Naive thymus-derived CD4-positive, alpha-beta T cell (primary cell): ENCODE measurements at regions of chr7 and their contacts with region 1.

Region 1: DNA sequence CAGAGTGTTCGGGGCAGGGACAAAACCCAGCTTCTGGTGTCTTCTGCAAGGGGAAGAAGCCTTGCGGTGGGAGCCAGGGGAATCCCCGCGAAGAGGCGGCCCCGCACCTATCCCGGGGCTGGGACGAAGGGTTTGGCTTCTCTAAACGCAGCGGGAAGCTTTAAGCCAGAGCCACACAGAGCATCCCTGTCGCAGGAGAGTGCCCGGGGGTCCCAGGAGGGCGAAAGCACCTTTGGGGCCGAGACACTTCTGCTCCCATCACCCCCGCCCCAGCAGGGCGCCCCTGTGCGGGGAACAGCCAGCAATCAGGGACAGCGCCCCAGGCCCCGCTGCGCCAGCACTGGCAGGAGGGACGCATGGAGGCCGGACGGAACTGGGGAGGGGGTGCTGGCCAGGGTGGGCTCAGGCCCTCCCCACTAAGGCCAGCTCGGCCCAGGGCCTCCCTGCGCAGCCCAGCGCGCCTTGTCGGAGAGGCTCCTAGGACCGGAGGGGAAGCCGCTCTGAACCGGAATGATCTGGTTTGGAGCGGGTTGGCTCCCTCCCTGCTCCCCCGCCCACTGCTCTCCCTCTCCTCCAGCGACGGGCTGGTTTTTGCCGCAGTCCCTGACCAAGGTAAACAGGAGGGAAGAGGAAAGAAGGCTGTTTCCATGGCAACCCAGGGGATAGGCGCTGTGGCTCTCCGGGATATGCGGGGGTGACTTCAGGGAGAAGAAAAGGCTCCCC is 63.9 kb downstream of the TMEM209 start:
- DNase-seq: peak in 8 of 9 donors; percentile 28 to 67 (median 56)
- ATAC-seq: peak; percentile 64
- H3K4me3 ChIP-seq: peak overlapping the region; percentile 79
- H3K4me3 Mint-ChIP-seq: peak overlapping the region; percentile 71 to 90 (median 85)
- H3K27ac ChIP-seq: peak overlapping the region; percentile 87
- H3K27ac Mint-ChIP-seq: peak overlapping the region; percentile 46 to 87 (median 83)
- H3K4me1 ChIP-seq: peaks cover 0 to 13% of the 10 kb centered on the region in 2 donors
- H3K4me1 Mint-ChIP-seq: peaks cover 6 to 35% (median 13%) of the 10 kb centered on the region in 7 donors
- H3K27me3 ChIP-seq: no peaks in the 10 kb centered on the region
- H3K27me3 Mint-ChIP-seq: peaks cover 0 to 17% (median 0%) of the 10 kb centered on the region in 5 donors

Region 2: GRCh38 chr7:130205084-130205947 is 64.0 kb after region 1 on chr7 and contains the start of gene TMEM209:
- CTCF ChIA-PET with region 1: no interaction called
- POLR2A ChIA-PET with region 1: interaction called, 5 read pairs
- intact Hi-C with region 1: loop called in 1 of 2 experiments (anchors 1 kb)
- DNase-seq: peak; percentile 80 to 96 (median 93)
- ATAC-seq: peak; percentile 98
- H3K4me3 ChIP-seq: peak within 1 kb of the TSS; percentile 89
- H3K4me3 Mint-ChIP-seq: peak within 1 kb of the TSS; percentile 98 to 100 (median 100)
- H3K27ac ChIP-seq: peak within 1 kb of the TSS; percentile 83
- H3K27ac Mint-ChIP-seq: peak within 1 kb of the TSS; percentile 97 to 100 (median 99)
- H3K4me1 ChIP-seq: peaks cover 11 to 14% of the 10 kb centered on the region in 2 donors
- H3K4me1 Mint-ChIP-seq: peaks cover 13 to 43% (median 37%) of the 10 kb centered on the region in 7 donors
- H3K27me3 ChIP-seq: no peaks in the 10 kb centered on the region
- H3K27me3 Mint-ChIP-seq: peaks cover 0 to 9% (median 0%) of the 10 kb centered on the region in 5 donors
- total RNA-seq, gene TMEM209: 18.8 to 37.3 (median 35.1) TPM

Region 3: GRCh38 chr7:130322587-130322986 is 181.3 kb after region 1 on chr7:
- CTCF ChIA-PET with region 1: no interaction called
- POLR2A ChIA-PET with region 1: no interaction called
- intact Hi-C with region 1: no loop called
- DNase-seq: no peak
- ATAC-seq: no peak
- H3K4me3 ChIP-seq: no peak overlapping the region
- H3K4me3 Mint-ChIP-seq: no peak overlapping the region
- H3K27ac ChIP-seq: no peak overlapping the region
- H3K27ac Mint-ChIP-seq: peak overlapping the region in 2 of 9 donors; percentile 47 to 48
- H3K4me1 ChIP-seq: no peaks in the 10 kb centered on the region
- H3K4me1 Mint-ChIP-seq: peaks cover 0 to 3% (median 0%) of the 10 kb centered on the region in 7 donors
- H3K27me3 ChIP-seq: no peaks in the 10 kb centered on the region
- H3K27me3 Mint-ChIP-seq: no peaks in the 10 kb centered on the region

Region 4: DNA sequence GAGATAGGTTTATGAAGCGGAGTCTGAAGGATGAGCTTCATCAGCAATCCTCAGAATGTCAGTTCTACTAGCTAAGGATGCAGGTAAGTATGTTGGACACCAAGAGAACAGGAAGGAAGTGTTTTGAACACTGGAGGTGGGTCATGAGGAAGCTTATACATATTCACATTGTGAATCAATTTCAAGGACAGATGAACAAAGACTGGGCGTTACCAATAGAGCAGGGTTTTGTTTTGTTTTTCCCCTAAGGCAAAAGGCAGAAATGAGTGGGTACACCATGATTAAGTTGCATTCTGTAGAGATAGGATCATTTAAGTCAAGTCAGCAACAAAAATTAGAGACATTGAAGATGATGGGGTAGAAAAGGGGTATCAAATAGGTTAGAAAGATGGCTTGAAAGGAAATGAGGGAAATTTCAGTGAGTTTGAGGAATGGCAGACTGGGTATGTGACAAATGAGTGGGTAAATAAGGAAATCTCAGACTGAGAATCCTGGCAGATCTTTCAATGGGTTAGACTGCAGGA is 402.2 kb after region 1 on chr7:
- CTCF ChIA-PET with region 1: no interaction called
- POLR2A ChIA-PET with region 1: no interaction called
- intact Hi-C with region 1: no loop called
- DNase-seq: no peak
- ATAC-seq: no peak
- H3K4me3 ChIP-seq: no peak overlapping the region
- H3K4me3 Mint-ChIP-seq: no peak overlapping the region
- H3K27ac ChIP-seq: no peak overlapping the region
- H3K27ac Mint-ChIP-seq: no peak overlapping the region
- H3K4me1 ChIP-seq: no peaks in the 10 kb centered on the region
- H3K4me1 Mint-ChIP-seq: no peaks in the 10 kb centered on the region
- H3K27me3 ChIP-seq: no peaks in the 10 kb centered on the region
- H3K27me3 Mint-ChIP-seq: no peaks in the 10 kb centered on the region